Panc1 (cell line): ENCODE measurements at regions of chr11 and their contacts with region 1.

Region 1: DNA sequence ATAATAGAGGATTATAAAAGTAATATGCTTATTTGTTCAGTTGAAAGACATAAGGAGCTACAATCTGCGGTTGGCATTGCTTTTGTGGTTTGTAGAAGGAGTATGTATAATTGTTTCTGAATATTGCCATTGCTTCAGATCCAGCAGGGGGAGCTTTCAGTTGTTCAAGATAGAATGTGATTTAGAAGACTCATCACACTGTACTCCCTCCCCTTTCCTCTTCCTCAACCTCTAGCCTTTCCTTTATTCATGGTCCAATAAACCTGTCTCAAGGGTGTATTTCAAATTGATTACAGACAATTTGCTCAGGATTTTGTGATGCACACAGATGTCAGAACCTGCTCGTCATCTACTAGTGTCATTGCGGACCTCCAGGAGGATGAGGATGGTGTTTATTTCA is 9.8 kb downstream of the PRMT3 start:
- DNase-seq: no peak
- ATAC-seq: peak; percentile 92
- H3K4me3 ChIP-seq: no peak overlapping the region
- H3K27ac ChIP-seq: no peak overlapping the region
- H3K4me1 ChIP-seq: no peaks in the 10 kb centered on the region
- H3K27me3 ChIP-seq: no peaks in the 10 kb centered on the region
- CTCF ChIP-seq: peak; percentile 74

Region 2: GRCh38 chr11:20360650-20361049 is 36.6 kb before region 1 on chr11:
- CTCF ChIA-PET with region 1: interaction called, 10 read pairs
- POLR2A ChIA-PET with region 1: no interaction called
- in situ Hi-C with region 1: no loop called
- intact Hi-C with region 1: no loop called
- DNase-seq: no peak
- ATAC-seq: peak; percentile 35; the same call in 1 of the 2 replicates
- H3K4me3 ChIP-seq: peak overlapping the region in 1 of 2 experiments; percentile 27; a peak in 2 of 4 replicates
- H3K27ac ChIP-seq: peak overlapping the region; percentile 61; the same call in 1 of the 2 replicates
- H3K4me1 ChIP-seq: peaks cover 19% of the 10 kb centered on the region
- H3K27me3 ChIP-seq: no peaks in the 10 kb centered on the region
- CTCF ChIP-seq: no peak

Region 3: GRCh38 chr11:20443596-20443995 is 46.3 kb after region 1 on chr11:
- CTCF ChIA-PET with region 1: no interaction called
- POLR2A ChIA-PET with region 1: no interaction called
- in situ Hi-C with region 1: no loop called
- intact Hi-C with region 1: loop called (anchors 10 kb)
- DNase-seq: peak; percentile 2
- ATAC-seq: 0 out of 2 replicates have a peak, but pooled peaks have one; percentile 53
- H3K4me3 ChIP-seq: no peak overlapping the region
- H3K27ac ChIP-seq: no peak overlapping the region
- H3K4me1 ChIP-seq: no peaks in the 10 kb centered on the region
- H3K27me3 ChIP-seq: no peaks in the 10 kb centered on the region
- CTCF ChIP-seq: peak; percentile 50; the same call in 1 of the 2 replicates

Region 4: DNA sequence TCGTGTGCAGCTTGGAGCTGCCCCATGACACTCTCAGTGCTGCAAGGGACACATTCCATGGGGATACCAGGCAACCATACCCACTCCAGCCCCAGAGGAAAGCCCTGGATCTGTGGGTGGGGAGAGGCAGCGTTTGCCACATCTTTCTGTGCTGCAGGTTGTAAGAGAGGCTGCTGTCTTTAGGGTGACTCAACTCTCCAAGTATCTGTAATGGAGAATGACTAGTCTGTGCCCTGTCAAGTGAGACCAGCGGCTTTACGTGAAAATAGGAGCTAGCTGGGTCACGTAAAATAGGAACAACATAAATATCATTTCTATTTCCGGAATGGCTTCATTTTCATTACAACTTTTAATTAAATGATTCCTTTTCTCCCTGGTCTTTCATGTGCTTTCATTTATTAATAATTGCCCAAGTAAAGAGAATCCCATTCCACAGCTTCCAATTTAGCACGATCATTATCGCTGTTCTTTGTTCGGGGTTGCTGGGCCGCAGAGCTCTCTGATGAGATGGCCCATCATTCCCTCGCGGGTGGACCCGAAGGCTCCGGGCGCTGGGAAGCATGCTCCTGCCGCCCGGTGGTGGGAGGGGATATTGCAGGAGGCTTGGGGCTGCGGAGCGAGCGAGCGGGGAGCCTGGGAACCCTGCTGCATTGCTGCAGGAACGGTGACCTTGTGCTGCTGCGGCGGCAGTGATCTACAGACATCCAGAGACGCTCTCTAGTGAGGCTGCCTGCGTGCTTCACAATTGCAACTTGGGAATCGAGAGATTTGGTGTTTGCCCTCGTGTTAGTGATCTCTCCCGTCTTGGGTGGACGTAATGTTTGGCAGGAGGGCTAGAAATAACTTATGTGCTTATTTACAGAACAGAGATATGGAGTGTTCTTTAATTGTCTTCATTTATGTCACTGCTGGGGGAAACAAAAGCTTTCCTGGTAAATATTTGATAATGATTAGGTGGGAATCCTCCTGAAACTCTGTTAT is 212.7 kb after region 1 on chr11:
- CTCF ChIA-PET with region 1: interaction called, 6 read pairs
- POLR2A ChIA-PET with region 1: interaction called, 5 read pairs
- in situ Hi-C with region 1: no loop called
- intact Hi-C with region 1: loop called (anchors 1 kb)
- DNase-seq: peak; percentile 39
- ATAC-seq: peak; percentile 98
- H3K4me3 ChIP-seq: peak overlapping the region; percentile 18 to 44; a peak in 3 of 4 replicates
- H3K27ac ChIP-seq: no peak overlapping the region
- H3K4me1 ChIP-seq: no peaks in the 10 kb centered on the region
- H3K27me3 ChIP-seq: peaks cover 19% of the 10 kb centered on the region
- CTCF ChIP-seq: peak; percentile 97